Tibial artery (tissue), 4 donors: ENCODE measurements at regions of chr4 and their contacts with region 1.

Region 1: DNA sequence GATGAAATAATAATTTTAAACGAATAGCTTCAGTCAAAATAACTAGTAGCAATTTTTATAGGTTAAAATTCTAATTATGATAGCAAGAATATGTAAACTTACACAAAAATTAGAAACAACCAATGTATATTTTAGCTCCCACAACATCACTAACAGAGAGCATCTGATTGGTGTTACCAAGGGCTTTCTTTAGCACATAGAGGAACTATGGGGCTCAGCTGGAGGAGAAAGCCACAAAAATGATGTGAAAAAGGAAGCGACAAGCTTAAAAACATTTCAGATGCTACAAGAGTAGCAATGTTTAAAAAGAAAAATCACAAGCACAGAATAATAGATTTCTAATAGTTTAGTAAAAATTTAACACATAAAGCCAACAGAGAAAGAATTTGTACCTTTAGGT is 56.3 kb downstream of the ATP8A1 start:
- DNase-seq: no peak
- H3K4me3 ChIP-seq: no peak overlapping the region
- H3K27ac ChIP-seq: no peak overlapping the region
- H3K4me1 ChIP-seq: peaks cover 0 to 10% (median 1%) of the 10 kb centered on the region in 4 donors
- H3K27me3 ChIP-seq: no peaks in the 10 kb centered on the region
- CTCF ChIP-seq: no peak

Region 2: GRCh38 chr4:42627885-42628646 is 27.5 kb after region 1 on chr4:
- intact Hi-C with region 1: loop called (anchors 2 kb)
- DNase-seq: peak; percentile 49 to 81
- H3K4me3 ChIP-seq: no peak overlapping the region
- H3K27ac ChIP-seq: no peak overlapping the region
- H3K4me1 ChIP-seq: peaks cover 0 to 14% (median 7%) of the 10 kb centered on the region in 4 donors
- H3K27me3 ChIP-seq: no peaks in the 10 kb centered on the region
- CTCF ChIP-seq: no peak